ENCODE measurements at regions of chr20 and their contacts with region 1.

Region 1: GRCh38 chr20:9978397-9979004 is 56.3 kb upstream of the ANKEF1 start:
- ATAC-seq: peak; percentile 84 to 99 (median 93)
- H3K4me3 ChIP-seq: no peak overlapping the region
- H3K27ac ChIP-seq: no peak overlapping the region
- H3K4me1 ChIP-seq: no peaks in the 10 kb centered on the region

Region 2: DNA sequence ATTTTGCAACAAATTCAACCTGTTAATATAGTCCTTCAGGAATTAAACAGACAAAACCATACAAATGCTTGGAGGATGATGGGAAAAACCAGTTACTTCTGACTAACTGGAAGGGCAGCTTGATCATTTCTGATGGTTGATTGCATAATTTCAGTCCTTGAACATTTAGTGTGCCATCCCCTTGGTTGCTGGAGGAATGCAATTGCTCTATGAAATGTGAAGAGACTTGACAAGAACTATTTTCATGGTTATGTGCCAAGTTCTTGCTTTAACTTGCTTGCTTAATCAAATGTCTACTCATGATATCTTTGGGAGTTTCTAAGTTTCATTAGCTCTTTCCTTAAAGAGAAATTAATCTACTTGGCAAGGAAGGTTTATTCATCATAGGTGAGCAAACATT is 101.5 kb after region 1 on chr20:
- in situ Hi-C with region 1: loop called in 2 of 9 experiments (anchors 10 to 25 kb)
- ATAC-seq: peak in 1 of 8 experiments; percentile 23
- H3K4me3 ChIP-seq: no peak overlapping the region
- H3K27ac ChIP-seq: no peak overlapping the region
- H3K4me1 ChIP-seq: peaks cover 0 to 7% of the 10 kb centered on the region in 2 donors

Region 3: DNA sequence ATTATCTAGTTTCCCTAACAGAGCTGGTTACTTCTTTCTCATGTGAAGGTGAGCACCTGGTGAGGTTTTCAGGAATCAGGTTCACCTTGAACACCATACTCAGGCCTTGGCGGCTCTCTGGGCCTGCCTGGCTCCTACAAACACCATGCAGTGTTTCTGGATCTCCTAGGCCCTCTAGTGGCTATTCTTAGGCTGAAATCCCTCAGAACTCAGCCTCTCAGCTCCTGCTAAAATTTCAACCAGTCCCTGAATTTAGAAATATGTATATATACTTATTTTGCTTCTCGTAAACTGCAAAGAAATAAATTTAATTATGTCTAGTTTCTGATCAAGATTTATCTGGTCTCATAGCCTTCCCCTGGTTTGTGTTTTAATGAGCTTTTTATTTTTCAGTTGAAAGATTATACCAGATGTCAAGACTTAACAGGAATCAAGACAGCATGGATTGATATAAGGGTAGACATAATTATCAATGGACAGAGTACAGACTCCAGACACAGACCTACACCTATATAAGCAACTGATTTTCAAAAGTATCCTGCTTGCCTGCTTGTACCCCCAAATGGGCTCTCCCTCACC is 112.2 kb after region 1 on chr20:
- in situ Hi-C with region 1: loop called in 3 of 9 experiments (anchors 10 to 25 kb)
- ATAC-seq: peak; percentile 64 to 94 (median 82)
- H3K4me3 ChIP-seq: no peak overlapping the region
- H3K27ac ChIP-seq: no peak overlapping the region
- H3K4me1 ChIP-seq: peaks cover 0 to 2% of the 10 kb centered on the region in 2 donors

Region 4: GRCh38 chr20:10357974-10358373 is 379.5 kb after region 1 on chr20:
- in situ Hi-C with region 1: loop called in 1 of 9 experiments (anchors 25 kb)
- ATAC-seq: peak in 2 of 8 experiments; percentile 24 to 43
- H3K4me3 ChIP-seq: no peak overlapping the region
- H3K27ac ChIP-seq: no peak overlapping the region
- H3K4me1 ChIP-seq: no peaks in the 10 kb centered on the region

Region 5: DNA sequence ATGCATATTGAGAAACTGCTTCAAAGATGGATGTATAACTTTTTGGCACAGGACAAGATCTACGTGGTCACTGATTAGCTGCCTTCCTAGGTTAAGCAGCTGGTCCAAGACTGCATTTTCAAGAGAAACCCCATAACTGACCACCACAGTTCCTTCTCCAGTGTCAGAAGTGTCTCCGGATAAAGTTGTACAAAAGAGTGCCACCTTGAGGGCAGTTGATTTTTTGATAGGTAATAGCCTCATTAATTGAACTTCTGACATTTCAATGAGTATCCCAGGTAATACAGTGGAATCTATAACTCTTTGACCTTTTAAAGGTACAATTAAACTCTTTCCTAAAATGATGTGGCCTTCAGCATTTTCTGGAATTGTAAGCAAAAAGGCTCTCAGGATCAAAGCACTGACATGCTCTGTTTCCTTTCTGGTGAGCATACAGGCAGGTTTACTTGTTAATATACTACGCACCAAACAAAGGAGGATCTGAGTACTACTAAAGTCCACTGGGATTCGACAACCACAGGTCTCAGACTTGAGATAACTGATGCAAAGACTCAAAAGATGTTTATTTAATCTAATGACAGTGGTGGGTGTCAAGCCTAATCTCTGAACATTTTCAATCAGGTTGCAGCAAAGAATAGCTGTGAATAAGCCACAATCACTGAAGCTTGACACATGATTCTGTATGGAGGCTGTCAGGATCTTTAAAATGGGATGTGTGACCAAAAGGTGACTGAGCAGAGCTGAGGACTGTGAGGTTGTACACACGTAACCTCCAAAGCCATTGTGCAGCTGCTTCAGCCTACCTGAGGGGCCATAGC is 434.3 kb after region 1 on chr20:
- in situ Hi-C with region 1: loop called in 2 of 9 experiments (anchors 25 kb)
- ATAC-seq: no peak
- H3K4me3 ChIP-seq: no peak overlapping the region
- H3K27ac ChIP-seq: no peak overlapping the region
- H3K4me1 ChIP-seq: peaks cover 3 to 7% of the 10 kb centered on the region in 2 donors

Region 6: DNA sequence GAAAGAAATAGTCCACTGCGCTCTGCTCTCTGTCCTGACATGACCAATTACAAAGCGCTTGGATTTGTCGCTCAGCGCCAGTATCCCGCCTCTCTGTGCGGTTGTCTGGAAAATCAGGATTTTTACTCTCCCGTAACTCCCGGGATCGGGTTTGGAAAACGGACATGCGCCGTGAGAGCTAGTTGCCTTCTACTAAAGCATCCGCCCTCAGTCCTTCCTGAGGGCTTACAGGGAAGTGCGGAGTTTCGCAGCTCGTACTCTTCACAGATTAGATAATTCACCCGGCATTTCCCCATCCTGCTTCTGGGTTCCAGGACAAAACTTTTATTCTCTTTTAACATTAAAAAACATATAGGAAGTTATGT is 455.9 kb after region 1 on chr20:
- in situ Hi-C with region 1: loop called in 3 of 9 experiments (anchors 10 to 25 kb)
- ATAC-seq: peak; percentile 71 to 81 (median 80)
- H3K4me3 ChIP-seq: peak overlapping the region; percentile 58 to 91 (median 80)
- H3K27ac ChIP-seq: peak overlapping the region; percentile 38 to 88
- H3K4me1 ChIP-seq: peaks cover 5 to 10% of the 10 kb centered on the region in 2 donors

Measured in motor neuron (in vitro differentiated cells).